ENCODE measurements at regions of chrX and their contacts with region 1.

Region 1: GRCh38 chrX:83892433-83892832 is 31.5 kb downstream of the CYLC1 start:
- DNase-seq: no peak

Region 2: GRCh38 chrX:83906921-83907320 is 14.5 kb after region 1 on chrX:
- intact Hi-C with region 1: loop called in 1 of 2 experiments (anchors 1 kb)
- DNase-seq: no peak

Region 3: DNA sequence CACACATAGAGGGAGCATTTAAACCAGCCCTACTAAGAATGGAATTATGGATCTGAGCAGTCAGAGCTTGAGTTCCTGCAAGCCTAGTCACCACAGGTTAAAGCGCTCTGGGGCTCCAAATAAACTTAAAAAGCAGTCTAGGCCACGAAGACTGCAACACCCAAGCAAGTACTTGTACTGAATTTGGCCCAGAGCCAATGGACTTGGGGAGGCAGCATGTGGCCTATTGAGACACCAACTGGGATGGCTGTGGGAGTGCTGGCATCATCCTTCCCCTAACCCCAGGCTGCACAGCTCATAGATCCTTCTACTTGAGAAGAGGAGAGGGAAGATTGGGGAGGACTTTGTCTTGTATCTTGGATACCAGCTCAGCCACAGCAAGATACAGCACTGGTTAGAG is 407.0 kb after region 1 on chrX:
- intact Hi-C with region 1: no loop called
- DNase-seq: no peak

Measured in posterior vena cava (tissue), 2 donors.